Posterior cingulate gyrus (tissue), 11 donors: ENCODE measurements at regions of chr22 and their contacts with region 1.

Region 1: DNA sequence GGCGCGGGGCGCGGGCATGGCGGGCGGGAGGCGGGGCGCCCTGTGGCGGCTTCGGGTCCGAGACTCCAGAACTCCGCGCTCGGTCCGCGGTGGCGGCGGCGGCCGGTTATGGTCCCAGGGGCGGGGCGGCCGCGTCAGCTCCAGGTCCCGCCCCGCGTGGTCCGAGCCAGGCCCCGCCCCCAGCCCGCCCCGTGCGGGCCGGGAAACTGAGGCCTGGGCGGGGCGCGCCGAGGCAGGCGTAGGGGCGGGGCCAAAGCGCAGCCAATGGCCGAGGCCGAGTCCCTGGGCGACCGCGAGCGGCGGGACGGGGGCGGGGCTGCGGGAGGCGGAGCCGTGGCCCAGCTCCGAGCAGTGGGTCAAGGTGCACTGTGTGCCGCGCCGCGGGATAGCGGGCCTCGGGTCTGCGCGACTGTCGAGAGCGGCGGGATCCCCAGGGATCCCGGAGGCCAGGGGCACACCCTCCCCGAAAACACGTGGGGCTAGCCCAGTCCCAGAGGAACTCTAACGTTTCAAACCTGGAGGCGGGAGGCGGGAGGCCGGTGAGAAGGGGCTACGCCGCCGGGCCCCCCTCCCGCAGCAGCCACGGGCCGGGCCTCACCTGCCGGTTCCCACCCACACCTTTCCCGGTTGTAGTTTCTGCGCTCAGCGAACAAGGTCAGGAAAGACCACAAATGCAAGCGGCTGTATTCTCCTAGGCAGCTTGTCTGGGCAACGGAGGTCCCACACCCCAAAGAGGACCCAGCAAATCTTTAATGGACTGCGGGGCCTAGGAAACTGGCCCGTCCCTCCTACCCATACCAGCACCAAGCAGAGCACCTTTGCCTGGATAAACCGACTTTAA is at the start of gene SLC25A1:
- DNase-seq: peak; percentile 83 to 99 (median 92)

Region 2: DNA sequence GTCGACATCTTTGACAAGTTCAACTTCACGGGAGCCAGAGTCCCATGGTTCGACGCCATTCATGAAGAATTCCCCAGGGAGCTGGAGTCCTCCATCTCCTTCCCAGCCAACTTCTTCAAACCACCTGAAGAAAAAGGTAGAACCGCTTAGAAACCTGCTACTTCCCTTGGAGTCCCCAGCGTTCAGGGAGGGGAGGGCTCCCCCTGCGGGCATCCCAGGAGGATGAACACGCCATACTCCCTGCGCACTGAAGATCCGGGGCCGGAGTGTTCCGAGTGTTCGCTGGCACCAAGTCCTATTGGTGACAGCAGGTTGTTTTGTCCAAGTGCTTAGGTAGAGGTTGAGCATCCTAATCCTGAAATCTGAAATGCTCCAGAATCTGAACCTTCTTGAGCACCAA is 191.1 kb before region 1 on chr22:
- intact Hi-C with region 1: no loop called
- DNase-seq: no peak

Region 3: DNA sequence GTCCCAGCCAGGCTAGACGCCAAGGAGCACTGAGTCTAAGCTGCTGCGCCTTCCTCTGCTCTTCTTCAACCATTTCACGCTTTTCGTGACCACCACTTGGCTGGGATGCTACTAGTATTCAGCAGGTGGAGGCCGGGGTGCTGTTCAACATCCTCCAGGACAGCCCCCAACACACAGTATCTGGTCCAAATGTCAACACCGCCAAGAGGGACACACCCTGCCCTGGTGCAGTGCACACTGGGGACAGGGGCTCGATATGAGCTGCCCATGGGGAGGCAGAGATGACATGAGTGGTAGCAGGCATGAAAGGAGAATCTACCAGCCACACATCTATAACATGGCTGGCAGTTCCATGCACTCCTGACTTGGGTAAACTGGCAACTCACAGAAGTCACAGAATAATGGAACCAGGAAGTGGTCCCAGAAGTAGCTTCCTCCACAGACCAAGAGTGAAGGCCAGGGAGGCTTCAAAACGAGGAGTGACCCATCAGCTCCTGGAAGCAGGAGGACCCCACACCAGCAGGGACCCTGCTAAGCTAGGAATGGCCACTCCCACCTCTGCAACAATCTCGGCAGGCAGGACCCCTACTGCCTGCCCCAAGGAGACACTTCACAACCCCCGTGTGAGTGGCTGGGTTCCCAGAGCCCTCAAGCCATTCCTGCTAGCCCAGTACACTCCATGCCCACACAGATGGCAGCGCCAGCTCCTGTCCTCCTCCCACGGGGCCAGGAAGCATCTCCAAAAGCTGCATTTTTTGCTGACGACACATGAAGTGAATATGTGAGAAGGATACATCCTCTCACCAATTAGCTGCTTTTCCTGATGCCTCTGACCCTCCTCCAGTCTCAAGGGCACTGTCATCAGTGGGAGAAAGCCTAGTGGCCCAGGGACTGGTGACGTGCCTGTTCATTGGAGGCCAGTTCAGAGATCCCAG is 135.5 kb before region 1 on chr22:
- intact Hi-C with region 1: no loop called
- DNase-seq: peak in 5 of 10 donors; percentile 6 to 74 (median 47)

Region 4: DNA sequence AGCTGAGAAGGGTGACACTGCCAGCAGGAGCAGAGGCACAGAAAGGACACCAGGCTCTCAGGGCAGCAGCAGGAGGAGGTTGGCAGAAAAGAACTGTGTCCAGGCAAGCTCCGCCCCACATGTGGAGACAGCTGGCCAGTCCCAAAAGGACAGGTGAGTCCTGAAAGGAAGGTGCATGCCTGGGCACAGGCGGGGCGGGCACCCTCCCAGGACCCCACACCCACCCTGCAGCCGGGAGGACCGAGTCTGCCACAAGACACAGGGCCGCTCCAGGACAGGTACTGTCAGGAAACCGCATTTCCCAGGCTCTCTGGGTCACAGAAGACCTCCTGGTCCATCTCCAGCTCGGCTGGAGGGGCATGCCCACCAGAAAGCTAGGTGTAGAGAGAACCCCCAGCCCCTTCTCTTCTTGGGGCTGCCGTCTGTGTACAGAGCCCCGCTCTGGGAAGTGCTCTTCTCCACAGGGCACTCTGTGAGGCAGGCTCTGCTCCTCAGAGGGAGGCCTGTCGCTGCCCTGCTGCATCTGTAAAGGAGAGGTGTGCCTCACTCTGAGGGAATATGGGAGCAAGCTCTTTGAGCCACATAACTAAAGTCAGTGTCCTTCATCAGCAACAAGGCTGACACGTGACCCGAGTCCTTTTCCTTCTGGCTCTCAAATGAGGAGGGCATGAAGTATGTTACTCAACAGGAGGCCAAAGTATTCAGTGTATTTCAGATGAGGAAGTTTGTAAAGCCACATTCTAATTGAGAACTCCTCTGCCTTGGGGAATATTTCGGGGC is 62.1 kb after region 1 on chr22:
- intact Hi-C with region 1: loop called (anchors 10 kb)
- DNase-seq: no peak

Region 5: GRCh38 chr22:19291580-19292457 is 112.9 kb after region 1 on chr22 and contains the start of gene CLTCL1:
- intact Hi-C with region 1: loop called (anchors 2 kb)
- DNase-seq: peak; percentile 56 to 96 (median 72)